Breast epithelium (tissue), 4 donors: ENCODE measurements at regions of chr6 and their contacts with region 1.

Region 1: GRCh38 chr6:88870717-88871330 is 92.6 kb downstream of the RNGTT start:
- DNase-seq: no peak
- H3K4me3 ChIP-seq: no peak overlapping the region
- H3K27ac ChIP-seq: no peak overlapping the region
- H3K4me1 ChIP-seq: no peaks in the 10 kb centered on the region
- H3K27me3 ChIP-seq: no peaks in the 10 kb centered on the region
- CTCF ChIP-seq: peak in 2 of 3 donors; percentile 45 to 61
- POLR2A ChIP-seq: no peak

Region 2: DNA sequence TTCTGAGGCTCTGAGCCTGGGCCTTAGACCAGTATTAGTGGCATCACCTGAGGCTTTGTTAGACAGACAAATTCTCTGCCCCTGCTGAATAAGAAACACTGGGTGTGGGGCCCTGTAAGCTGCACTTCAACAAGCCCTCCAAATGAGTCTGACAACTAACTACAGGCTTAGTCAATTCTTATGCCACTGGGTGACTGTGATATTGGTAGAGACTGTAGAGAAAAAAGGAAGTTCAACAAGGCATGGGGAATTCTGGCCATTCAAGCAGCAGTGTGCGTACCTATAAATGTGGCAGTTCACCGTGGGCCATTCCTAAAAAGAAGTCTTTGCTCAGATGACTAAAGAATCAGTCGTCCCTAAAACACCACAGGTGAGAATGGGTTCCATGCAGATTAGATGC is 866.1 kb after region 1 on chr6:
- intact Hi-C with region 1: loop called (anchors 5 kb)
- DNase-seq: no peak
- H3K4me3 ChIP-seq: no peak overlapping the region
- H3K27ac ChIP-seq: no peak overlapping the region
- H3K4me1 ChIP-seq: no peaks in the 10 kb centered on the region
- H3K27me3 ChIP-seq: no peaks in the 10 kb centered on the region
- CTCF ChIP-seq: no peak
- POLR2A ChIP-seq: no peak